ENCODE measurements at regions of chr2 and their contacts with region 1.

Region 1: DNA sequence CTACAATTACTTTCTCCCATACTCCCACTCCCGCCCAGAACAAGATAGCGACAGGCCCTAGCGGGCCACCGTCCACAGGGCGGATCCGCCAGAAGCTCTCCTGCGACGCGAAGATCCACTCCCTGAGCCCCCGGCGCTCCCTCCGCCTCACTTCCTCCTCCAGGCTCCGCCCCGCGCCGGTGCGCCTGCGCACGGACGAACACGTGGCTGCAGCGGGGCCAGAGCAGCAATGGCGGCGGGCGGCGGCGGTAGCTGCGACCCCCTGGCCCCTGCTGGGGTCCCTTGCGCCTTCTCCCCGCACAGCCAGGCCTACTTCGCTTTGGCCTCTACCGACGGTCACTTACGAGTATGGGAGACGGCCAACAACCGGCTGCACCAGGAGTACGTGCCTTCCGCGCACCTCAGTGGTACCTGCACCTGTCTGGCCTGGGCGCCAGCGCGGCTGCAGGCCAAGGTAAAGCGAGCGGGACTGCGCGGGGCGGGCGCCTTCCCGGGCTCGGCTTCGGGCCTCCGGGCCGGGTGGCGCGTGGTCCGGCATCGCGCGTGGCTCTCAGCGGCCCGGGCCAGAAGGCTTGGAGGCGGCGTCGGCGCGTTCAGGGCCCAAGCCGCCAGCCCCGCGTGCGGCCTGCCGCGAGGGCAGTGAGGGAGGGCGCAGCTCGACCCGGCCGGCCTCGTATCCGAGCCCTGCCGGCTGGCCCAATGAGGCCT is at the start of gene WDR43:
- DNase-seq: peak; percentile 97 to 99 (median 98)
- H3K4me3 ChIP-seq: peak within 1 kb of the TSS; percentile 75 to 91
- H3K4me3 Mint-ChIP-seq: peak within 1 kb of the TSS; percentile 91 to 100 (median 96)
- H3K27ac ChIP-seq: peak within 1 kb of the TSS; percentile 83
- H3K27ac Mint-ChIP-seq: peak within 1 kb of the TSS; percentile 88 to 99 (median 95)
- H3K4me1 ChIP-seq: peaks cover 43% of the 10 kb centered on the region
- H3K4me1 Mint-ChIP-seq: peaks cover 33 to 50% (median 40%) of the 10 kb centered on the region in 4 donors
- H3K27me3 ChIP-seq: no peaks in the 10 kb centered on the region
- H3K27me3 Mint-ChIP-seq: peaks cover 0 to 2% of the 10 kb centered on the region in 2 donors
- total RNA-seq, gene WDR43: 52.9 to 57.5 TPM

Region 2: GRCh38 chr2:28780496-28780895 is 114.1 kb before region 1 on chr2:
- CTCF ChIA-PET with region 1: no interaction called
- POLR2A ChIA-PET with region 1: no interaction called
- intact Hi-C with region 1: no loop called
- DNase-seq: no peak
- H3K4me3 ChIP-seq: no peak overlapping the region
- H3K4me3 Mint-ChIP-seq: no peak overlapping the region
- H3K27ac ChIP-seq: no peak overlapping the region
- H3K27ac Mint-ChIP-seq: peak overlapping the region in 2 of 7 donors; percentile 11 to 46
- H3K4me1 ChIP-seq: peaks cover 7% of the 10 kb centered on the region
- H3K4me1 Mint-ChIP-seq: peaks cover 10 to 19% (median 15%) of the 10 kb centered on the region in 4 donors
- H3K27me3 ChIP-seq: no peaks in the 10 kb centered on the region
- H3K27me3 Mint-ChIP-seq: no peaks in the 10 kb centered on the region

Region 3: GRCh38 chr2:28870146-28870891 is 24.3 kb before region 1 on chr2 and contains the start of gene TRMT61B:
- CTCF ChIA-PET with region 1: interaction called, 12 read pairs
- POLR2A ChIA-PET with region 1: interaction called, 98 read pairs
- intact Hi-C with region 1: loop called (anchors 1 kb)
- DNase-seq: peak; percentile 95 to 96 (median 96)
- H3K4me3 ChIP-seq: peak within 1 kb of the TSS; percentile 99
- H3K4me3 Mint-ChIP-seq: peak within 1 kb of the TSS; percentile 93 to 100 (median 96)
- H3K27ac ChIP-seq: peak within 1 kb of the TSS; percentile 95
- H3K27ac Mint-ChIP-seq: peak within 1 kb of the TSS; percentile 98 to 100 (median 100)
- H3K4me1 ChIP-seq: peaks cover 39% of the 10 kb centered on the region
- H3K4me1 Mint-ChIP-seq: peaks cover 20 to 46% (median 31%) of the 10 kb centered on the region in 4 donors
- H3K27me3 ChIP-seq: no peaks in the 10 kb centered on the region
- H3K27me3 Mint-ChIP-seq: peaks cover 0 to 2% of the 10 kb centered on the region in 2 donors
- total RNA-seq, gene TRMT61B: 17.4 TPM

Measured in CD4-positive, alpha-beta memory T cell (primary cell).